AG04449 (cell line): ENCODE measurements at regions of chr14 and their contacts with region 1.

Region 1: DNA sequence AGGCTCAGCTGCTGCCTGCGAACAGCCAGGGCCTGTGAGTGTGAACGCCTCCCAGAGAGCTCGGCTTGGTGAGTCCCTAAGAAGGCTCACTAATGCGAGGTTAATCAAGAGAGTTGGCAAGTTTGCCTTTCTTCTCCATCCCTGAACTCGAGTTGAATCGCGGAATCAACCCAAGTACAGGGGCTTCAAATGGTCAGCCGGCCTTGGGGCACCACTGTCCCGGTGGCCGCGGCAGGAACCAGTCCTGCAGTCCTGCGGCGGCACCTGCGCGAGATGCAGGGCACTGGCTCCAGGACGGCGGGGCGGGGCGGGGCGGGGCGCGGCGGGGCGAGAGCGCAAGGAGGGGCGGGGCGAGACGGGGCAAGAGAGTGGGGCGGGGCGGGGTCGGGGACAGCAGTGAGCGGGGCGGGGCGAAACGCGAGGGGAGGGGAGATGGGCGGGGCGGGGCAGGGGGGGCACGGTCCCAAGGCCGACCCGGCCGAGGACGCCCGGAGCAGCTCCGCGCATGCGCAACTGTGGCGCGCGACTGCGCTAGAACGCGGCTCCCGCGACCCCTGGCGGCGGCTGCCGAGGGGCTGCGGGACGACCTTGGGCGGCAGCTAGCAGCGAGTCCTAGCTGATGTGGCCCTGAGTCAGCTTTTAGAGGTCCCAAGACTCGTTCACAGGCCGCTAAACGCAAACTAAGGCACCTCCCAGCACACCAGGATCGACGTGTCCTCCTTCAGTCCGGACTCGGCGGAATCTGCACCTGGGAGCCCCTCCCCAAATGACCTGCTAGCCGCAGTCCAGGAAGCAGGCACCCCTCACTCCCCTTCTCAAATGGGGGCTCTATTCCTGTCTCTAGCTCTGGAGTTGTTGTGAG is 58.0 kb downstream of the TTC7B start:
- DNase-seq: peak; percentile 16
- H3K4me3 ChIP-seq: peak overlapping the region; percentile 74
- CTCF ChIP-seq: peak; percentile 97

Region 2: GRCh38 chr14:90288651-90289355 is 469.5 kb before region 1 on chr14:
- CTCF ChIA-PET with region 1: interaction called, 12 read pairs
- POLR2A ChIA-PET with region 1: no interaction called
- DNase-seq: no peak
- H3K4me3 ChIP-seq: no peak overlapping the region
- CTCF ChIP-seq: no peak

Region 3: GRCh38 chr14:90399541-90400444 is 358.5 kb before region 1 on chr14:
- CTCF ChIA-PET with region 1: interaction called, 90 read pairs
- POLR2A ChIA-PET with region 1: interaction called, 3 read pairs
- DNase-seq: no peak
- H3K4me3 ChIP-seq: peak overlapping the region; percentile 97
- CTCF ChIP-seq: peak; percentile 100

Region 4: DNA sequence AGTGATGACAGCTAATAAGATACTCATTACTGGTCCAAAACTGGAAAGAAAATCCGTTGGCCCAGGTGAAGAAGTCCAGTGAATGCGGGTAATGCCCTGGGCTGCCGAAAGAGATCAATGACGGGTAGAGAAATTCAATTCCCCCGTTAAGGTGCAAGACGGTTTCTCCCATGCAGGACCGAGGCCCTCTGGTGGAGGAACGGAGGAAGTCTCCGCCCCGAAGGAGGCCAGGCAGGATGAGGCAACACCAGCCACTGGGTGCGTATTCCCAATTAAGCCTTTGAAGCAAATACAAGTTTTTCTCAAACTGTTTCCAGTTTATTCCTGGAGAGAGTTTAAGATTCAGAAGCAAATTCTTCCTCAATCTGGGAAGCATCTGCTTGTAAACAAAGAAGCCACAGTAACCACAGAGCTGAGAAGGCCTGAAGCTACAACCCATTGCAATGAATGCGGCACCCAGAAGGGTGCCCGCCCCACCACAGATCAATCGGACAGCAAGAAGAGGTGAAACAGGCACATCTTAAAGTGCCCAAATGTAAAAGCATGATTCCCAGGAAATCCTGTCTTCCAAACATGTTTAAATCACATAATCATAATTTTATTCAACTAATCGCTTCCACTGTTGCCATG is 60.6 kb before region 1 on chr14:
- CTCF ChIA-PET with region 1: interaction called, 44 read pairs
- POLR2A ChIA-PET with region 1: no interaction called
- DNase-seq: no peak
- H3K4me3 ChIP-seq: no peak overlapping the region
- CTCF ChIP-seq: peak; percentile 95

Region 5: GRCh38 chr14:90739318-90740068 is 18.8 kb before region 1 on chr14:
- CTCF ChIA-PET with region 1: interaction called, 36 read pairs
- POLR2A ChIA-PET with region 1: no interaction called
- DNase-seq: no peak
- H3K4me3 ChIP-seq: no peak overlapping the region
- CTCF ChIP-seq: no peak

Region 6: GRCh38 chr14:90785471-90785870 is 27.2 kb after region 1 on chr14:
- CTCF ChIA-PET with region 1: interaction called, 46 read pairs
- POLR2A ChIA-PET with region 1: no interaction called
- DNase-seq: no peak
- H3K4me3 ChIP-seq: no peak overlapping the region
- CTCF ChIP-seq: no peak

Region 7: DNA sequence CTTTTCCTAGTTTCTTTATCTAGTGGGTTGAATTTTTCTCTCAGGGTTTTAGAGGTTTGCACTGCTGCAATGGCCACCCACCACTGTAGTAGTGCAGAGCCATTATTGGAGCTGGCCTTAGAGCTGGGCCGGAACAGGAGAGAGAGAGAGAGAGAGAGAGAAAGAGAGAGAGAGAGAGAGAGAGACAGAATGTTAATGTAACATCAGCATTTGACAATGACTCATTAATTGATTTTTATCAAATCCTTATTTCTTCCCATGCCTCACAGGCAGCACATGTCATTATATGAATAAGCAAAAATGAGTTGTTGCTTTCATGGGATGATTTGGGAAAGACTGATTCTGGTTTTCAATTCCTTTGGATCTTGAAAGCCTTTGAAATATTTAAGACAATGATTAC is 828.2 kb after region 1 on chr14:
- CTCF ChIA-PET with region 1: no interaction called
- POLR2A ChIA-PET with region 1: no interaction called
- DNase-seq: no peak
- H3K4me3 ChIP-seq: no peak overlapping the region
- CTCF ChIP-seq: no peak